Activated T-helper 1 cell treated with anti-CD3 and anti-CD28 coated beads, Interleukin-12 subunit alpha, Interleukin-12 subunit beta, Interleukin-2, Interleukin-4 antibody, amounts not matched to agents 30 ng/mL and 10 ng/mL and 1 ng/mL, durations not matched to agents 14 hours and 24 hours and 36 hours (primary cell): ENCODE measurements at regions of chr16 and their contacts with region 1.

Region 1: DNA sequence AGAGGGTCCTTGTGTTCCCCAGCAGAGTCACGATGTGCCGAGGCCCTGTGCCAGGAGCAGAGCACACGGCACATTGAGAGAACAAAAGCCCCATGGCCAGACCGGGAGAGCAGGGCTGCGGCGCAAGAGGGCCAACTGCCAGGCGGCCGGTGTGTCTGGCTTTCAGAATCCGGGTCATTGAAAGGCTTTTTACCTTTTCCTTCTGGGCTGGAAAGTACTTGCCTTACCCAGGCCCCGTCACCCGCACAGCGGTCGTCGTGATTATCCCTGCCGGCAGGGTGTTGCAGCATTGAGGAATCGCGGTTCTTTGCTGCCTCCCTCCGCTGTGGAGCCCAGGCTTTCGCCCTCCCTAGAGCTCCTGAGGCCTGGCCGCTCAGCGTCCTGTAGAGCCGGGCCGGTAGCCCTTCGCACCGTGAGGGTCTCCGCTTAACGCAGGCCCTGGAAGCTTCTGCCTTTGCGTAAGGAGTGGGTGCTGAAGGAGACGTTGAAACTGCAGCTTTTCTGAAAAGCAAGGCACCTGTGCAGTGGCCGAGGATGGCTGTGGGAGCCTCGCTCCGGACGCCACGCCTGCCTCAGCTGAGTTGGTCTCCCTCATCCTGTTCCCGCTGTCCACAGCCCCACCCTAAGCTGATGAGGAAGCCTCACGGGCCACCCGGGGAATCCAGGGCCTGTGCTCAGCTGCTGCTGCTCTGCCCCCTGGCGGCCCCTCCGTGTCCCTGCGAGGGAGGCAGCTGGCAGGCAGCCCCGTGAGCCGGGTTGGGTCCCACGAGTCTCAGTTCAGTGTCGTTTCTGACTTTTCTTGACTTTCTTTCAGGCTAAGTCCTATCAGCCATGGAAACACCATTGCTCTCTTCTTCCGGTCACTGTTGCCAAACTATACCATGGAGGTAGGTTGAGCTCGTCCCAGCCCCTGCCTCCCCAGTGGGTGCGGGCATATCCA is 8.6 kb upstream of the MC1R start:
- DNase-seq: peak; percentile 52
- H3K4me3 Mint-ChIP-seq: no peak overlapping the region
- H3K27ac Mint-ChIP-seq: no peak overlapping the region
- H3K4me1 Mint-ChIP-seq: no peaks in the 10 kb centered on the region
- H3K27me3 Mint-ChIP-seq: no peaks in the 10 kb centered on the region

Region 2: DNA sequence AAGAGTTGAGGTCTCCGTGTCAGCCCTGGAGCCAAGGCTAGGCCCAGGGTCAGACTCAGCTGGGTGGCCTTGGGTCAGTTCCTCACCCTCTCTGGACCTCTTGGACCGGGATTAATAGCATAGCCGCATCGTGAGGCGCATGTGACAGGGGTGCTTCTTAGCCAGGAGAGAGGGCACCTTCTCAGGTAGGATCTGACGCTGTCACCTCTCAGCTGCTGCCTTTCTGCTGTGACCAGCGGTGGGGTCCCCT is 72.8 kb before region 1 on chr16:
- intact Hi-C with region 1: loop called (anchors 2 kb)
- DNase-seq: no peak
- H3K4me3 Mint-ChIP-seq: no peak overlapping the region
- H3K27ac Mint-ChIP-seq: no peak overlapping the region
- H3K4me1 Mint-ChIP-seq: peaks cover 10% of the 10 kb centered on the region
- H3K27me3 Mint-ChIP-seq: no peaks in the 10 kb centered on the region

Region 3: GRCh38 chr16:89873972-89874689 is 35.9 kb before region 1 on chr16:
- intact Hi-C with region 1: no loop called
- DNase-seq: peak; percentile 88
- H3K4me3 Mint-ChIP-seq: peak overlapping the region; percentile 90
- H3K27ac Mint-ChIP-seq: peak overlapping the region; percentile 99
- H3K4me1 Mint-ChIP-seq: peaks cover 11% of the 10 kb centered on the region
- H3K27me3 Mint-ChIP-seq: peaks cover 2% of the 10 kb centered on the region

Region 4: GRCh38 chr16:89945670-89946069 is 35.6 kb after region 1 on chr16:
- intact Hi-C with region 1: no loop called
- DNase-seq: no peak
- H3K4me3 Mint-ChIP-seq: no peak overlapping the region
- H3K27ac Mint-ChIP-seq: no peak overlapping the region
- H3K4me1 Mint-ChIP-seq: no peaks in the 10 kb centered on the region
- H3K27me3 Mint-ChIP-seq: peaks cover 46% of the 10 kb centered on the region